K562 (cell line): ENCODE measurements at regions of chr20 and their contacts with region 1.

Region 1: GRCh38 chr20:49846206-49846807 is 33.7 kb downstream of the SLC9A8 start:
- DNase-seq: peak; percentile 38 to 76 (median 60)
- ATAC-seq: peak; percentile 94
- H3K4me3 ChIP-seq: no peak overlapping the region
- H3K27ac ChIP-seq: no peak overlapping the region
- H3K4me1 ChIP-seq: peaks cover 4 to 6% of the 10 kb centered on the region in 2 experiments; a peak in 2 of 5 replicates
- H3K27me3 ChIP-seq: no peaks in the 10 kb centered on the region
- CTCF ChIP-seq: peak; percentile 63 to 83 (median 73)
- EP300 ChIP-seq: no peak
- POLR2A ChIP-seq: no peak
- RAD21 ChIP-seq: peak; percentile 82 to 86

Region 2: GRCh38 chr20:49790077-49790798 is 56.1 kb before region 1 on chr20:
- CTCF ChIA-PET with region 1: no interaction called
- POLR2A ChIA-PET with region 1: no interaction called
- in situ Hi-C with region 1: no loop called
- intact Hi-C with region 1: loop called (anchors 2 kb)
- DNase-seq: peak; percentile 88 to 95 (median 89)
- ATAC-seq: peak; percentile 82
- H3K4me3 ChIP-seq: 0 out of 2 replicates have a peak overlapping the region, but pooled peaks have one; percentile 1
- H3K27ac ChIP-seq: peak overlapping the region; percentile 87
- H3K4me1 ChIP-seq: peaks cover 35 to 57% of the 10 kb centered on the region in 2 experiments
- H3K27me3 ChIP-seq: no peaks in the 10 kb centered on the region
- CTCF ChIP-seq: peak in 2 of 3 experiments; percentile 26 to 49; a peak in 2 of 6 replicates
- EP300 ChIP-seq: peak; percentile 96
- POLR2A ChIP-seq: no peak
- RAD21 ChIP-seq: peak; percentile 35 to 65